Transverse colon (tissue), 4 donors: ENCODE measurements at regions of chr5 and their contacts with region 1.

Region 1: GRCh38 chr5:107516452-107517184 is 154.1 kb downstream of the EFNA5 start:
- DNase-seq: no peak
- H3K4me3 ChIP-seq: no peak overlapping the region
- H3K27ac ChIP-seq: no peak overlapping the region
- H3K4me1 ChIP-seq: peaks cover 3 to 22% (median 6%) of the 10 kb centered on the region in 4 donors
- H3K27me3 ChIP-seq: no peaks in the 10 kb centered on the region
- CTCF ChIP-seq: no peak
- EP300 ChIP-seq: no peak
- POLR2A ChIP-seq: no peak

Region 2: GRCh38 chr5:107043665-107044064 is 473.0 kb before region 1 on chr5:
- in situ Hi-C with region 1: no loop called
- intact Hi-C with region 1: no loop called
- DNase-seq: no peak
- H3K4me3 ChIP-seq: no peak overlapping the region
- H3K27ac ChIP-seq: no peak overlapping the region
- H3K4me1 ChIP-seq: no peaks in the 10 kb centered on the region
- H3K27me3 ChIP-seq: no peaks in the 10 kb centered on the region
- CTCF ChIP-seq: no peak
- EP300 ChIP-seq: no peak
- POLR2A ChIP-seq: no peak

Region 3: DNA sequence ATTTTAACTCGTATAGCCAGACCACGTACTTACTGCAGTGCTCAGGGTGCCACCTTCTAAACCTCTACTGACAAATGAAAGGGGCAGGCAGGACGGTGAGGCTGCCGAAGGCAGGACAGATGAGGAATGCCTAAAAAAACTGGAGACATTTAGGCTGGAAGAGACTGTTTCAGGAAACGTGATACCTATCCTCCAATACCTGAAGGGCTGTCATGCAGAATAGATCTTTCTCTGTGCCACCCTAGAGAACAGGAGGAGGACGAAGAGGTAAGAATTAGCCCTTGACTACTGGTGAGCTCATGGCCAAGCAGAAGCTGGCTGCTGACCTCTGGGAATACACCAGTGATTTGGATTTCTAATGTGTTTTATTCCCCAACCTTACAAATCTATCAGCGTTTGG is 14.7 kb after region 1 on chr5:
- in situ Hi-C with region 1: no loop called
- intact Hi-C with region 1: loop called (anchors 2 kb)
- DNase-seq: no peak
- H3K4me3 ChIP-seq: no peak overlapping the region
- H3K27ac ChIP-seq: no peak overlapping the region
- H3K4me1 ChIP-seq: no peaks in the 10 kb centered on the region
- H3K27me3 ChIP-seq: no peaks in the 10 kb centered on the region
- CTCF ChIP-seq: no peak
- EP300 ChIP-seq: no peak
- POLR2A ChIP-seq: no peak

Region 4: GRCh38 chr5:107900721-107901120 is 384.1 kb after region 1 on chr5:
- in situ Hi-C with region 1: no loop called
- intact Hi-C with region 1: no loop called
- DNase-seq: no peak
- H3K4me3 ChIP-seq: no peak overlapping the region
- H3K27ac ChIP-seq: no peak overlapping the region
- H3K4me1 ChIP-seq: no peaks in the 10 kb centered on the region
- H3K27me3 ChIP-seq: no peaks in the 10 kb centered on the region
- CTCF ChIP-seq: no peak
- EP300 ChIP-seq: no peak
- POLR2A ChIP-seq: no peak